Psoas muscle (tissue), 8 donors: ENCODE measurements at regions of chr7 and their contacts with region 1.

Region 1: GRCh38 chr7:114865564-114865963 is 56.3 kb upstream of the MDFIC start:
- DNase-seq: peak; percentile 39 to 50
- ATAC-seq: peak; percentile 64 to 88 (median 76)
- H3K4me3 ChIP-seq: no peak overlapping the region
- H3K27ac ChIP-seq: no peak overlapping the region
- H3K4me1 ChIP-seq: no peaks in the 10 kb centered on the region
- H3K27me3 ChIP-seq: no peaks in the 10 kb centered on the region
- CTCF ChIP-seq: peak; percentile 80

Region 2: DNA sequence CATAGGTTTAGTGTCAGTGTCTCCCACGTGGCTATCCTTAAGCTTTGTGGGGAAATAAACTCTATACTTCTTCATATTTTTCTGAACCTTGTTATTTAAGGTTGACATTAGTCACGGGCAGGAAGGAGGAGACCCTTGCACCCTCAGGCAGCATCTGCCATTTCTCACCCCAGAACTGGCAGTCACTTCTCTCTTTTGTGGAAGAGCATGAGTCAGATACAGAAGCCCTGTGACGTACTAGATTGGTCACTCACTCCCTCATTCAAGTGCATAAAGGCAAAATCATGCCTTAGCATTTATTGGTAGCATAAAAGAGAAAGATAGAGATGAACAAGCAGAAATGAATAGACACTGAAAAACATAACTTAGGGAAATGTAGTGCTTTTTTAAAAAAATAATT is 149.7 kb before region 1 on chr7:
- intact Hi-C with region 1: no loop called
- DNase-seq: no peak
- ATAC-seq: no peak
- H3K4me3 ChIP-seq: no peak overlapping the region
- H3K27ac ChIP-seq: no peak overlapping the region
- H3K4me1 ChIP-seq: no peaks in the 10 kb centered on the region
- H3K27me3 ChIP-seq: no peaks in the 10 kb centered on the region
- CTCF ChIP-seq: no peak

Region 3: DNA sequence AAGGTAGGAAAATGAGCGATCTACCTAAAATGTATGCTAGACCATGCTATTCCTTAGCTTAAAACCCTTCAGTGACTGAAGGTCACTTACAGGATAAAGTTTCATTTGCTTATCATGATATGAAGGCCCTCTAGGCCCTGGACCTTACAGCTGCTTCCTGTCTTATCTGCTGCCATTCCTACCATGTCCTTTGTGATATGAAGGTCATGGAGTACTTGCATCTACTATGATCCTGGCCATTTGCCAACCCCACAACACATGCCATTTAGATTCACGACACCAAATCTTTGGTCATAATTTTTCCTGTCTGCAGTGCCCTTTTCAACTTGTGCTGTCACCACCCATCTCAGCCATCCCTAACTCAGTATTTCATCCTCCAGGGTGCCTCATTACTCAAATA is 125.5 kb before region 1 on chr7:
- intact Hi-C with region 1: no loop called
- DNase-seq: no peak
- ATAC-seq: no peak
- H3K4me3 ChIP-seq: no peak overlapping the region
- H3K27ac ChIP-seq: no peak overlapping the region
- H3K4me1 ChIP-seq: no peaks in the 10 kb centered on the region
- H3K27me3 ChIP-seq: no peaks in the 10 kb centered on the region
- CTCF ChIP-seq: no peak

Region 4: GRCh38 chr7:114784746-114785145 is 80.8 kb before region 1 on chr7:
- intact Hi-C with region 1: no loop called
- DNase-seq: no peak
- ATAC-seq: no peak
- H3K4me3 ChIP-seq: no peak overlapping the region
- H3K27ac ChIP-seq: no peak overlapping the region
- H3K4me1 ChIP-seq: no peaks in the 10 kb centered on the region
- H3K27me3 ChIP-seq: no peaks in the 10 kb centered on the region
- CTCF ChIP-seq: no peak

Region 5: GRCh38 chr7:115217373-115217772 is 351.8 kb after region 1 on chr7:
- intact Hi-C with region 1: loop called in 1 of 2 experiments (anchors 10 kb)
- DNase-seq: no peak
- ATAC-seq: no peak
- H3K4me3 ChIP-seq: no peak overlapping the region
- H3K27ac ChIP-seq: no peak overlapping the region
- H3K4me1 ChIP-seq: no peaks in the 10 kb centered on the region
- H3K27me3 ChIP-seq: no peaks in the 10 kb centered on the region
- CTCF ChIP-seq: peak; percentile 30

Region 6: DNA sequence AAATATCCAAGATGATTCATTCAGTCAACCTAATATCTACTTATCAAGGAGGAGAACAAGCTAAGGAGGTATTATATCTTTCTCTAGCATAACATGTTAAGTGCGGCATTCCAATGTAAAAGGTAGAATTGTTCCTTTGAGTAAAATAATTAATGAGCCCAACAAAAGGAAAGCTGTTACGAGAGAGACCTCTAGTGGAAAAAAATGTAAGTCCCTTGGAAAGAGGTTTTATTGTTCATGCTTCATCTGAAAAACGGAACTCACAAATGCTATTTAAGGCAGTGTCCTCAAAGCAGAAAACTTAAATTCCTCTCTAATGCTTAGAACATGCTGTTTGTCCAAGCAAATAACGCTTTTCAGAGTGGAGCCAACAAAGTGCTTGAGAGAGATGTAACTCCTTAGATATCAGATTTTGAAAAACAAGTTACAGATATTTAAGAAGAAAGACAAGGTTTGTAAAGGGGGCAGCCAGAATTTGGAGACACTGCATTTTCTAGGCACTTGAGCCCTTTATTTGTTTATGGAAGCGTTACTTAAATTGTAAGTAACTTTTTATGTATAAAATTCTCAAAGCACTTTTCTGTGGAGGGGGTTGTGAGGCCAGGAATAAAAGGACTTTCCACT is 1045.1 kb after region 1 on chr7:
- intact Hi-C with region 1: loop called in 1 of 2 experiments (anchors 10 kb)
- DNase-seq: no peak
- ATAC-seq: no peak
- H3K4me3 ChIP-seq: no peak overlapping the region
- H3K27ac ChIP-seq: no peak overlapping the region
- H3K4me1 ChIP-seq: peaks cover 6% of the 10 kb centered on the region
- H3K27me3 ChIP-seq: no peaks in the 10 kb centered on the region
- CTCF ChIP-seq: peak; percentile 48